ENCODE measurements at regions of chr1 and their contacts with region 1.

Region 1: GRCh38 chr1:210250998-210251679 is 18.5 kb downstream of the SERTAD4 start:
- DNase-seq: peak; percentile 93
- H3K4me3 ChIP-seq: peak overlapping the region; percentile 49 to 64
- H3K27ac ChIP-seq: peak overlapping the region in 1 of 2 experiments; percentile 83; a peak in 2 of 4 replicates
- H3K4me1 ChIP-seq: peaks cover 11 to 16% of the 10 kb centered on the region in 2 experiments; a peak in 3 of 4 replicates
- H3K27me3 ChIP-seq: no peaks in the 10 kb centered on the region
- CTCF ChIP-seq: no peak
- EP300 ChIP-seq: peak; percentile 44 to 48; a peak in 3 of 4 replicates
- RAD21 ChIP-seq: peak; percentile 7; the same call in 1 of the 2 replicates

Region 2: GRCh38 chr1:210233216-210234020 is 17.7 kb before region 1 on chr1:
- CTCF ChIA-PET with region 1: interaction called, 7 read pairs
- POLR2A ChIA-PET with region 1: interaction called, 12 read pairs
- DNase-seq: peak; percentile 78
- H3K4me3 ChIP-seq: peak overlapping the region; percentile 78 to 84
- H3K27ac ChIP-seq: peak overlapping the region; percentile 35 to 97
- H3K4me1 ChIP-seq: peaks cover 25 to 36% of the 10 kb centered on the region in 2 experiments
- H3K27me3 ChIP-seq: no peaks in the 10 kb centered on the region
- CTCF ChIP-seq: no peak
- EP300 ChIP-seq: peak in 1 of 2 experiments; percentile 75; a peak in 2 of 4 replicates
- RAD21 ChIP-seq: no peak

Region 3: GRCh38 chr1:210239349-210240111 is 11.6 kb before region 1 on chr1:
- CTCF ChIA-PET with region 1: interaction called, 10 read pairs
- POLR2A ChIA-PET with region 1: no interaction called
- DNase-seq: peak; percentile 62
- H3K4me3 ChIP-seq: peak overlapping the region in 1 of 2 experiments; percentile 17; a peak in 1 of 4 replicates
- H3K27ac ChIP-seq: peak overlapping the region; percentile 64 to 71; a peak in 3 of 4 replicates
- H3K4me1 ChIP-seq: peaks cover 29 to 42% of the 10 kb centered on the region in 2 experiments
- H3K27me3 ChIP-seq: no peaks in the 10 kb centered on the region
- CTCF ChIP-seq: peak; percentile 66
- EP300 ChIP-seq: peak in 1 of 2 experiments; percentile 73; a peak in 1 of 4 replicates
- RAD21 ChIP-seq: peak; percentile 68

Region 4: DNA sequence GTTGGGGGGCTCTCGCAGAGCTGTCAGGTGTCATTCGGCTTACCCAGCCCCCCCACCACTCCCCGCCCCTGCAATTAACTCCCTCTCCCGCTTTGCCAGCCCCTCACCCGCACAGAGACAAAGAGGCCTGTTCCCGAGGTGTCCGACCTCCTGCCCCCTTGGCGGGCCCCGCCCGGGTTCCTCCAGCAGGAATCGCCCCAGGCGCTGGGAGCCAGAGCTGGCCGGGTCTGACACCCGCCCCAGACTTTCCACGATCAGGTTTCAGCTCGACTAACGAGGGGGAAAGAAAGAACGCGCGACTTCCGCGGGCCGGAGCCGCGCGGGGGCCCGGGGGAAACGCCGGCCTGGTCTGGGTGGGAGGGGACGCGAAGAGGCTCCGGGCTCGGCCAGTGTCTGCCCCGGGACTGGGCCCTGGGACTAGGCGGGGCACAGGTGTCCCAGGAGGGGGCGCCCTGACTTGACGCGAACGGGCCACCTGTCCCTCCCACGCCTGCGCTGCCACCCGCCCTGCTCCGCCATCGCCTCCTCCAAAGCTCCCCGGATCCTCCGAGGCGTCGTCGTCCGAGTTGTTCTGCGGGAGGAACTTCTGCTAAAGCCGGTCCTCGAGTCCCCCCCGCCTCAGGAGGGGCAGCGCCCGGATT is 41.2 kb after region 1 on chr1:
- CTCF ChIA-PET with region 1: interaction called, 10 read pairs
- POLR2A ChIA-PET with region 1: interaction called, 26 read pairs
- DNase-seq: peak; percentile 80
- H3K4me3 ChIP-seq: peak overlapping the region; percentile 45 to 55
- H3K27ac ChIP-seq: peak overlapping the region; percentile 55 to 98; a peak in 3 of 4 replicates
- H3K4me1 ChIP-seq: peaks cover 23 to 43% of the 10 kb centered on the region in 2 experiments
- H3K27me3 ChIP-seq: no peaks in the 10 kb centered on the region
- CTCF ChIP-seq: peak; percentile 48
- EP300 ChIP-seq: no peak
- RAD21 ChIP-seq: no peak